Posterior cingulate gyrus (tissue), 11 donors: ENCODE measurements at regions of chr3 and their contacts with region 1.

Region 1: DNA sequence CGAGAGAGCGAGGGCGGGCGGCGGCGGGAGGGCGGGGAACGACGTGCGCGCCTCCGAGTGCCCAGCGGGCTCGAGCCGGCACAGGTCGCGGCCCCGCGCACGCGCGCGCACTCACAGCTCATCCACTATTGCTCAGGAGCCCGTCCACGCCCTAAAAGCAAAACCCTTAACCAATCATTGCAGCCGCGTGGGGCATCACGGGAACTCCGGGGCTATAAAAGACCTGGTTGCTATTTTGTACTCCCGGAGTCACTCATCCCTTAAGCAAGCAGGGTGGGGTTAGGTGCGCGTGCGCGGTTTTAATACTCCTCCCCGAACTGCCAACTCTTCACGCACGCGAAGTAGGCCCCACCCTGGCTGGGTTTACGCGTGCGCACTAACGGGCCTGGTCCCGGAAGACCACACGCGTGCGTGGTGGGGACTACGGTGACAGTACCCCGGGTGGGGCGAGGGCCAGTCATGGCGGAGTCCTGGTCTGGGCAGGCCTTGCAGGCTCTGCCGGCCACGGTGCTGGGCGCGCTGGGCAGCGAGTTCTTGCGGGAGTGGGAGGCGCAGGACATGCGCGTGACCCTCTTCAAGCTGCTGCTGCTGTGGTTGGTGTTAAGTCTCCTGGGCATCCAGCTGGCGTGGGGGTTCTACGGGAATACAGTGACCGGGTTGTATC is at the starts of genes RHOA and TCTA:
- DNase-seq: peak; percentile 97 to 100 (median 99)

Region 2: DNA sequence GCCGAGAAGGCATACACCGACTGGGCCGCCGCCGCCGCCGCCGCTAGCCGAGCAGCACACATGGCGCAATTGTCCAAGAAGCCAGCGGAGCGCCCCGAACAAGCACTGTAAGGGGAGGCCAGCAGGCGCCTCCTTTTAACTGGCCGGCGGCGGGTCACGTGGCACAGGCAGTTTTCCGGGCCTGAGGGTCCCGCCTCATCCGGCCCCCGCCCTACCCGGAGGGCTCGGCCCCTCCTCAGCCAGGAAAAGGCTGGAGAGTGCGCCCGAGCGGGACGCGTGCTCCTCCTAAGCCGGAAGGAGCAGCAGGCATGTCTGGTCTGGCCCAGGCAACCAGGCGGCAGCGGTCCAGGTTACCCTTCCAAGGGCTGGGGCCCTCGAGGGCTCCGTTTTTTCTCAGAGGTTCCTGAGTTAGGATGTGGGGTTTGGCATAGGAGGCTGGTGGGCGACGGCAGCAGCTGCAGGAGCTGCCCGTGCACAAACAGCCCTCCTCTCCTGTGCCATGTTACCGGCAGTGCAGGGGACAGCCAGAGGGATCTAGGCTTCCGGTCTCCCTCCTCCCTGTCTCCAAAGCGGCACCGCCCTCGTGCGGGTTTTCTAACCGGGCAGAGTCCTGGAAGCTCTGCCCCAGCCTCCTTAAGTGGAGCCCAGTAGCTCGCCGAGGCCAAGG is 53.8 kb before region 1 on chr3 and contains the start of gene GPX1:
- intact Hi-C with region 1: loop called (anchors 1 kb)
- DNase-seq: peak; percentile 89 to 99 (median 93)

Region 3: GRCh38 chr3:49469936-49470713 is 58.0 kb after region 1 on chr3 and contains the start of gene DAG1:
- intact Hi-C with region 1: loop called (anchors 1 kb)
- DNase-seq: peak; percentile 93 to 99 (median 95)